ENCODE measurements at regions of chr4 and their contacts with region 1.

Region 1: DNA sequence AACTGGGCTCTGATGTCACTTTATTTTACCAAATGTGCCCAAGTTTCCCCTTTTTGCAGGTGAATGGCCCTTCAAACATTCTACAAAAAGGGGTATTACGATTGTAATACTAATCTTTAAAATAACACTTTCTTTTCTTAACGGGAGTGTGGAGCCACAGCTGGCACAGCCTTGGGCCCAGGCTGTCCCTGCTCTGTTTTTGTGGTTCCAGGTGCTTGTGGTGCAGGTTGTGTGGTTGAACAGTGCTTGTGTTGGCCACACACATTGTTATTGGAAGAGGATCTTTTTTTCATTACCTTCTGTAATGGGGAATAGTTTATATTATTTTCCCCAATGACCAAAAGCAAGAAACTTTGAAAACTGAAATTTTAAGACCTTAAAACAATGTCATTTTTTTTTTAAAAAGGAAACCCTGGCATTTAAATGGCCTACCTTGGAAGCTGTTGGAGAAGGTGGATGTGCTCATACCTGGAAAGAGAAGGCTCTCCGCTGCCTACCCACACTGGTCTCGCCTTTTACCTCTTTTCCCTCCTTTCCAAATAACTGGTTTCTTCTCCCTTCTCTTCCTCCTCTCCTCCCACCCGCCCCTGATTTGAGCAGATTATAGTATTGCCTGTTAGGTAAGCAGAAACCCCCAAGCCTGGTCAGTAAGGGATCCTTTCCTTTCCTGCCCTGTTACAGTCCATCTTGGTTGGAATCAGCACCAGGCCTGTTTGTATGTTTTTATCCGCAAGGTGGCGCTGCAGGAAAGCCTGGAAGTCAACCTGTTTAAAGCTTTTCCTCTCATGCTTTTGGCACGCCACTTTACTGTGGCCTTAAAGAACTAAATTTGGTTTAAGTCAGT is 28.6 kb downstream of the HADH start:
- DNase-seq: peak; percentile 55
- H3K4me3 ChIP-seq: no peak overlapping the region
- H3K27ac ChIP-seq: no peak overlapping the region
- H3K27me3 ChIP-seq: no peaks in the 10 kb centered on the region
- CTCF ChIP-seq: peak; percentile 90

Region 2: DNA sequence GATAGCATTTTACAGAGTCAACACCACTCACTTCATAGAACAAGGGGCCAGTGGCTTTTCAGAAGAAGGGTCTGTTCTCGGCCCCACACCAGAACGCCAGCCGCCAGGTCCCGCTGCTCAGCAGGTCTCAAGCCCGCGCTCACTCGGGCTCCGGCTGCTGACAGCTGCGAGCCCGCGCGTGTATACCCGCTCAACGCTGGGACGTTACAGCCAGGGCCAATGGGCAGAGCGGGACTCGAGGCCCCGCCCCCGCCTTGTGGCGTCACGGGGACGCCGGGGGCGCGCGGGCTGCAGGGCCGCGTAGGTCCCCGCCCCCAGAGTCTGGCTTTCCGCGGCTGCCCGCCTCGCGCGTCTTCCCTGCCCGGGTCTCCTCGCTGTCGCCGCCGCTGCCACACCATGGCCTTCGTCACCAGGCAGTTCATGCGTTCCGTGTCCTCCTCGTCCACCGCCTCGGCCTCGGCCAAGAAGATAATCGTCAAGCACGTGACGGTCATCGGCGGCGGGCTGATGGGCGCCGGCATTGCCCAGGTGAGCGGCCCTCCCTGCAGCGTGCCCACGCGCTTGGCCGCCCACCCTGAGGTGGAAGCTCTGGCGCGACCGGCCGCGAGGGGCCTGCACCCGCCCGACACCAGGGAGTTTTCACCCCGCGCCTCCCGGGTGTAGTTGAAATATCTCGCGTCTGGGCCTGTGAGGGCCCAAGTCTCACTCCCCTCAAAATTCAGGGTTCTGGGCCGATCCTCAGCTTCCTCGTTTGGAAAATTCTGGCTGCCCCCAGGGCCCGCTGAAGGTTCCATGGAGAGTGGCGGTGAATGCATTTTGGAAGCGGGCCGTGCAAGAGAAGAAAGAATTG is 28.5 kb before region 1 on chr4 and contains the start of gene HADH:
- CTCF ChIA-PET with region 1: interaction called, 23 read pairs
- POLR2A ChIA-PET with region 1: no interaction called
- DNase-seq: peak; percentile 68
- H3K4me3 ChIP-seq: peak within 1 kb of the TSS; percentile 94
- H3K27ac ChIP-seq: peak within 1 kb of the TSS; percentile 11
- H3K27me3 ChIP-seq: no peaks in the 10 kb centered on the region
- CTCF ChIP-seq: no peak
- polyA plus RNA-seq, gene HADH: 20.5 and 23.0 TPM in 2 replicates

Region 3: GRCh38 chr4:108035691-108036090 is 17.4 kb after region 1 on chr4:
- CTCF ChIA-PET with region 1: interaction called, 35 read pairs
- POLR2A ChIA-PET with region 1: no interaction called
- DNase-seq: no peak
- H3K4me3 ChIP-seq: no peak overlapping the region
- H3K27ac ChIP-seq: no peak overlapping the region
- H3K27me3 ChIP-seq: no peaks in the 10 kb centered on the region
- CTCF ChIP-seq: no peak

Region 4: GRCh38 chr4:108492816-108493595 is 474.7 kb after region 1 on chr4:
- CTCF ChIA-PET with region 1: interaction called, 39 read pairs
- POLR2A ChIA-PET with region 1: no interaction called
- DNase-seq: no peak
- H3K4me3 ChIP-seq: no peak overlapping the region
- H3K27ac ChIP-seq: no peak overlapping the region
- H3K27me3 ChIP-seq: peaks cover 2% of the 10 kb centered on the region
- CTCF ChIP-seq: peak; percentile 62

Region 5: DNA sequence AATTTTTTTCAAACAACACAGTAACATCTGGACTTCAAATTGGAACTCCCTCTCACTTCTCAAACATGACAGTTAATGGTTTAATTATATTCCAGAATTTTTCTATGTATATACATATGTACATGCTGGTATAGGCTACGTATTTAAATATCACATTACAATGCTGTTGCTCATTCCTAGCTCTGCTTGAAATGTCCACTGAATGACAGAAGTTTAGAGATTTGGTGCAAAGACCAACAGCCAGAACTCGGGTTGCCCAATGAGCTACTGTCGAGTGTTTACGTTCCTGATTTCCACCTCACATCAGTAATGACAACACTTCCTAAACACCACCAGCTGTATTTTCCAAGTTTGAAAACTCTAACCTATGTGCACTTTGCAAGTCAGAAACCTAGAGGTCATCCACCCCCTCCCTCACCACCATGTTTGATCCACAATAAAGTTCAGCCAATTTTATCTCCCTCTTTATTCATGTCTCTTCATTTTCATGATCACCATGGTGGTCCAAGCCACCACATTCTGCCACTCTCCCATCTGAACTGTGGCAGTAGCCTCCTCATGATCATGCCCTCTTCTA is 552.8 kb after region 1 on chr4:
- CTCF ChIA-PET with region 1: interaction called, 163 read pairs
- POLR2A ChIA-PET with region 1: no interaction called
- DNase-seq: peak; percentile 3
- H3K4me3 ChIP-seq: no peak overlapping the region
- H3K27ac ChIP-seq: no peak overlapping the region
- H3K27me3 ChIP-seq: peaks cover 9% of the 10 kb centered on the region
- CTCF ChIP-seq: no peak

Measured in AG04450 (cell line).